ACHN (cell line): ENCODE measurements at regions of chr16 and their contacts with region 1.

Region 1: DNA sequence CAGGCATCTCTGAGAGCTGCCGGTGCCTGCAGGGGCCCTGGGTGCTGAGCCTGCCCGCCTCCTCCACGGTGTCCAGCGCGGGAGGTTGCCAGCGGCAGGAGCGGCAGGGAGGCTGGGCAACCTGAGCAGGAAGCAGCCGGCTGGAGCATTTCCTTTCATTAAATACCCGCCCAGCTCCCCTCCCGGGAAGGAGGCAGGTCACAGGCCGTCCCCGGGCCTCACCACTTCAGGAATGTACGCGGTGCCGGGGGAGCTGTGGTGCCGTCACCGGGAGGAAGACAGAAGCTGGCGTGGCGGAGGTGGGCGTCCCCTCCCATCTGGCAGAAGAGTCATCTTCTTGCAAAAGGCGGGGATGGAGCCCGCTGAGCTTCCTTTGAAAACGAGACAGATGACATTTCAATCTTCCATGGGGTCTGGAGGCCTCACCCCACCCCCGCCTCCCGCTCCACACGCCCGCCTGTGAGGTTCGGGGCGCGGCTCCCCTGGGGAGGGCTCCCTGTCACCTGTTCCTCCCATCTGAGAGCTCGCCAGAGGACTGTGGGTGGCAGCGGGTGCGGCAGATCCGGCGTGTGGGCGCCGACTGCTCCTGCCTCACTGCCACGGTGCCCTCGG is 16.0 kb downstream of the SOX8 start:
- DNase-seq: peak; percentile 57

Region 2: DNA sequence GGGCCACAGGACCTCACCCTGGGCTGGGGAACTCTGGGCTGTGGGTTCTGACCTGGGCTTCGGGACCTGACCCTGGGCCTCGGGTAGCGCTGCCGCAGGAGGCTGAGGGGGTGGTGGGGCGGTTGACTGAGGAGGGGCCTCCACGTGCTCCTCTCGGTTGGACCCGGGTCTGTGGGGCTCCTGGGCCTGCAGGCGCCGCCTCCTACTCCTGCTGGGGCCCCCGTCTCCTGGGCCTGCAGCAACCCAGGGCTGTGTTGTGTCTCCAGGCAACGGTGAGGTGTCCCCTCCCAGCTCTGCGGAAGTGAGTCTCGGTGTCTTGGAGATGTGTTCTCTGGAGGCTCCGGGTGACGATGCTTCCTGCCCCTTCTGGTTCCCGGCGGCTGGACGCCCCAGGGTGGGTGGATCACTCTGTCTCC is 155.5 kb before region 1 on chr16:
- in situ Hi-C with region 1: loop called (anchors 25 kb)
- DNase-seq: no peak